Mammary epithelial cell (primary cell): ENCODE measurements at regions of chr20 and their contacts with region 1.

Region 1: GRCh38 chr20:62999580-62999979 is 7.2 kb downstream of the BHLHE23 start:
- DNase-seq: no peak
- H3K4me3 ChIP-seq: no peak overlapping the region
- H3K27ac ChIP-seq: no peak overlapping the region
- H3K4me1 ChIP-seq: no peaks in the 10 kb centered on the region
- H3K27me3 ChIP-seq: peaks cover 14% of the 10 kb centered on the region
- CTCF ChIP-seq: no peak

Region 2: DNA sequence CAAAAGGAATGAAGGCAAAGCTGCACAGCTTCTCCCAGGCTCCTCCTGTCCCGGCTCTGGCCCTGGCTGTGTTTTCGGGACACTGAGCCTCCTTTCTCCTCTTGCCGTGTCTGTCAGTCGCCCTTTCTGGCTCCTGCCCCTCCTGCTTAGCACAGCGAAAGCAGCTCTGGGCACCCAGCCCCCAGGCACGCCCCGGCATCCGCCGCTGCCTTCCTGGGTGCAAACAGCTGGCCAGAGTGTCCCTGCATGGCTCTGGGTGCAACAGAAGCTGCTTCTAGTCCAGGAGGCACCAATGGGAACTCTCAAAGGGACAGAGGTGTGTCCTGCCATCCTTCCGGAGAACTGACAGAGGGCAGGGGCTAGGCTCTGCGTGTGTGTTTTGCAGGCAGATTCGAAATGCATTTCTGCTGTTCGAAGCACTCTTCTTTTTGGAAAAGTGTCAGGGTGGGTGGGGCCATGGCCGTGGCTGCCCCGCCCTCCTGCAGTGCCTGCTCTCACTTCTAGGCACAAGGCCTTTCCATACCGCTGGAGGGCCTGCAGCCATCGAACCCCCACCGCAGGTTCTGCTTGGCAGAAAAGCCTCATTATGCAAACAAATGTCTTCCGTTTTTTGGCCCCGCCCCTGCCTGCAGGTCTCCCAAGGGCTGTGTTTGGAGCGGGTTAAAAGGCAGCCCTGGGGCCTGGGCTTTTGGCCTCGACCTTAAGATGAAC is 167.2 kb before region 1 on chr20:
- CTCF ChIA-PET with region 1: no interaction called
- dilution Hi-C with region 1: no loop called
- in situ Hi-C with region 1: no loop called
- intact Hi-C with region 1: no loop called
- DNase-seq: no peak
- H3K4me3 ChIP-seq: no peak overlapping the region
- H3K27ac ChIP-seq: no peak overlapping the region
- H3K4me1 ChIP-seq: peaks cover 21% of the 10 kb centered on the region
- H3K27me3 ChIP-seq: no peaks in the 10 kb centered on the region
- CTCF ChIP-seq: no peak

Region 3: GRCh38 chr20:62943396-62943795 is 56.2 kb before region 1 on chr20:
- CTCF ChIA-PET with region 1: no interaction called
- dilution Hi-C with region 1: loop called (anchors 5 kb)
- in situ Hi-C with region 1: no loop called
- intact Hi-C with region 1: no loop called
- DNase-seq: no peak
- H3K4me3 ChIP-seq: no peak overlapping the region
- H3K27ac ChIP-seq: no peak overlapping the region
- H3K4me1 ChIP-seq: peaks cover 7% of the 10 kb centered on the region
- H3K27me3 ChIP-seq: no peaks in the 10 kb centered on the region
- CTCF ChIP-seq: no peak

Region 4: DNA sequence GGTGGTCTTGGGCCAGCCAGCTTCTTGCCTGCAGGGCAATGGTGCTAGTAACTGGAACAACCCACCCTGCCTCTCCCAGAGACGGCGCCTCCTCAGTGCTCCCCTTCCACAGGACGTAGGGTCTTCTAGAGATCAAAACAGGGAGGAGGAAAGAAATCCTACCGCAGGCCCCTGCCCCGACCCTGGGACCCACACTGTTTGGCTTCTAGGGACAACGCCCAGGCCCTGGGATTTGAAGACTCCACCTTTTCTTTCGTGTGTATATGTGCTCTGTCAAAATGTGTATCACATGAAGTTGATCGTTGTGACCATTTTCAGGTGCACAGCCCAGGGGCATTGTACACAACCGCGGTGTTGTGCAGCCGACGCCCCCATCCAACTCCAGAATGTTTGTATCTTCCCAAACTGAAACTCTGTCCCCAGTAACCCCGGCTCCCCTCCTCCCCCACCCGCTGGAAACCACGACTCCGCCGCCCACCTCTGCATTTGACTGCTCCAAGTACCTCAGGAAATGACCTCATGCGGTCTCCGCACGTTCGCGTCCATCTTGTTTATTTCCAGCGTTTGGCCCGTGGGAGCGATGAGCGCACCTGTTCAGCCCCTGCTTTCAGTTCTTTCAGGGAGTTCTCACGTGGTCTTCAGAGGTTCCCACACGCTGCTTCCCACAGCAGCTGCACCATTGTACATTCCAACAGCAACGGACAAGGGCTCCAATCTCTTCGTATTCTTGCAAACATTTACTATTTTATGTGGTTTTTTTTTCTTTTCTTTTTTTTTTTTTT is 10.6 kb after region 1 on chr20:
- CTCF ChIA-PET with region 1: no interaction called
- dilution Hi-C with region 1: no loop called
- in situ Hi-C with region 1: no loop called
- intact Hi-C with region 1: no loop called
- DNase-seq: no peak
- H3K4me3 ChIP-seq: no peak overlapping the region
- H3K27ac ChIP-seq: no peak overlapping the region
- H3K4me1 ChIP-seq: peaks cover 5% of the 10 kb centered on the region
- H3K27me3 ChIP-seq: peaks cover 53% of the 10 kb centered on the region
- CTCF ChIP-seq: no peak

Region 5: GRCh38 chr20:63023071-63023935 is 23.7 kb after region 1 on chr20:
- CTCF ChIA-PET with region 1: no interaction called
- dilution Hi-C with region 1: no loop called
- in situ Hi-C with region 1: no loop called
- intact Hi-C with region 1: loop called (anchors 1 kb)
- DNase-seq: no peak
- H3K4me3 ChIP-seq: no peak overlapping the region
- H3K27ac ChIP-seq: no peak overlapping the region
- H3K4me1 ChIP-seq: peaks cover 8% of the 10 kb centered on the region
- H3K27me3 ChIP-seq: peaks cover 21% of the 10 kb centered on the region
- CTCF ChIP-seq: no peak

Region 6: GRCh38 chr20:63082301-63082805 is 82.8 kb after region 1 on chr20:
- CTCF ChIA-PET with region 1: no interaction called
- dilution Hi-C with region 1: no loop called
- in situ Hi-C with region 1: no loop called
- intact Hi-C with region 1: no loop called
- DNase-seq: peak; percentile 21
- H3K4me3 ChIP-seq: no peak overlapping the region
- H3K27ac ChIP-seq: no peak overlapping the region
- H3K4me1 ChIP-seq: no peaks in the 10 kb centered on the region
- H3K27me3 ChIP-seq: no peaks in the 10 kb centered on the region
- CTCF ChIP-seq: no peak

Region 7: GRCh38 chr20:63223221-63224207 is 223.9 kb after region 1 on chr20:
- CTCF ChIA-PET with region 1: no interaction called
- dilution Hi-C with region 1: no loop called
- in situ Hi-C with region 1: no loop called
- intact Hi-C with region 1: no loop called
- DNase-seq: no peak
- H3K4me3 ChIP-seq: no peak overlapping the region
- H3K27ac ChIP-seq: no peak overlapping the region
- H3K4me1 ChIP-seq: peaks cover 8% of the 10 kb centered on the region
- H3K27me3 ChIP-seq: peaks cover 2% of the 10 kb centered on the region
- CTCF ChIP-seq: peak; percentile 66 to 90